Activated naive CD4-positive, alpha-beta T cell treated with anti-CD3 and anti-CD28 coated beads for 36 hours (primary cell): ENCODE measurements at regions of chr14 and their contacts with region 1.

Region 1: GRCh38 chr14:39102969-39103957 is at the start of gene SEC23A:
- DNase-seq: peak; percentile 87
- H3K4me3 Mint-ChIP-seq: peak within 1 kb of the TSS; percentile 87
- H3K27ac Mint-ChIP-seq: peak within 1 kb of the TSS; percentile 96
- H3K4me1 Mint-ChIP-seq: peaks cover 42% of the 10 kb centered on the region
- H3K27me3 Mint-ChIP-seq: no peaks in the 10 kb centered on the region
- total RNA-seq, gene SEC23A: 40.2 to 48.0 TPM

Region 2: GRCh38 chr14:39015360-39015961 is 87.8 kb before region 1 on chr14:
- CTCF ChIA-PET with region 1: no interaction called
- intact Hi-C with region 1: no loop called
- DNase-seq: peak; percentile 51
- H3K4me3 Mint-ChIP-seq: no peak overlapping the region
- H3K27ac Mint-ChIP-seq: no peak overlapping the region
- H3K4me1 Mint-ChIP-seq: no peaks in the 10 kb centered on the region
- H3K27me3 Mint-ChIP-seq: no peaks in the 10 kb centered on the region

Region 3: DNA sequence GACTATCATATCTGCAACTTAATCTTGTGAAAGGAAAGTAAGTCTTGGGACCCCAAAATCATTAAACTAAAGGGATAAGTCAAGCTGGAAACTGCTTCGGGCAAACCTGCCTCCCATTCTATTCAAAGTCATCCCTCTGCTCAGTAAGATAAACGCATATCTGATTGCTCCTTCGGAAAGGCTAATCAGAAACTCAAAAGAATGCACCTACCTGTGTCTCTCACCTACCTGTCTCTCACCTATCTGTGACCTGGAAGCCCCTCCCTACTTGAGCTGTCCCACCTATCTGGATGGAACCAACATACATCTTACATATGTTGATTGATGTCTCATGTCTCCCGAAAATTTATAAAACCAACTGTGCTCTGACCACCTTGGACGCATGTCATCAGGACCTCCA is 20.1 kb before region 1 on chr14:
- CTCF ChIA-PET with region 1: no interaction called
- intact Hi-C with region 1: no loop called
- DNase-seq: no peak
- H3K4me3 Mint-ChIP-seq: no peak overlapping the region
- H3K27ac Mint-ChIP-seq: no peak overlapping the region
- H3K4me1 Mint-ChIP-seq: peaks cover 2% of the 10 kb centered on the region
- H3K27me3 Mint-ChIP-seq: no peaks in the 10 kb centered on the region

Region 4: GRCh38 chr14:39114073-39114838 is 11.0 kb after region 1 on chr14 and contains the start of gene GEMIN2:
- CTCF ChIA-PET with region 1: no interaction called
- intact Hi-C with region 1: loop called (anchors 1 kb)
- DNase-seq: peak; percentile 96
- H3K4me3 Mint-ChIP-seq: peak within 1 kb of the TSS; percentile 94
- H3K27ac Mint-ChIP-seq: peak within 1 kb of the TSS; percentile 90
- H3K4me1 Mint-ChIP-seq: peaks cover 23% of the 10 kb centered on the region
- H3K27me3 Mint-ChIP-seq: no peaks in the 10 kb centered on the region
- total RNA-seq, gene GEMIN2: 20.7 to 22.7 TPM

Region 5: DNA sequence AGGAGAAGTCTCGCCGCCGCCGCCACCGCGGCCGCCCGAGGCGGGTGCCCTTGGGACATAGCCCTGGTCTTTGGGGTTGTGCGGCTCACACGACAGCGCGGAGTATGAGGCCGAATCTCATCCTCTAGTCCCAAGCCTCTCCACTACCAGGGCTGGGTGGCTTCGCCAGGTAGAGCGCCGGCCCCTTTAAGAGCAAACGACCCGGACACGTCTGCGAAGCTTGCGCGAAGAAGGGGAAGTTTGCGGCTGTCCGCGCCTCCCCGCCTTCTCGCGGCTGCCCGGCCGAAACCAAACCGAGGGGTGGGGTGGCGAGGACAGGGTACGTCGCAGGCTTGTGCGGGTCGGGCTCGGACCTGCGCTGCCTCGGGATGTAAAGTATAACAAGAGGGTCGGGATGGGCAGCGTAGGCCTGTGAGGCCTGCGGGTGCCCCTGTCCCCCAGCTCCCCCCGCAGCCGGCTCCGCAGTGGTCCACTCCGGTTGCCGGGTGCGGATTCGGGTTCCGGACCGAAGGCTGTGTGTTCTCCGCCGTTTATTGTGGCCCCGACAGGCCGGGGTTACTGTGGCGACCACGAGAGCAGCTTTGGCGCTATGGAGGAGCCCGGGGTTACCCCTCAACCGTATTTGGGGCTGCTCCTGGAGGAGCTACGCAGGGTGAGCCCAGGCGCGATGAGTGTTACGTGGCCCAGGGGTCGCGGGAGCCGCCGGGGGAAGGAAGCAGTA is 163.8 kb after region 1 on chr14:
- CTCF ChIA-PET with region 1: no interaction called
- intact Hi-C with region 1: loop called (anchors 2 kb)
- DNase-seq: peak; percentile 68
- H3K4me3 Mint-ChIP-seq: peak overlapping the region; percentile 72
- H3K27ac Mint-ChIP-seq: peak overlapping the region; percentile 93
- H3K4me1 Mint-ChIP-seq: peaks cover 48% of the 10 kb centered on the region
- H3K27me3 Mint-ChIP-seq: no peaks in the 10 kb centered on the region

Region 6: GRCh38 chr14:39383026-39383660 is 279.9 kb after region 1 on chr14:
- CTCF ChIA-PET with region 1: interaction called, 3 read pairs
- intact Hi-C with region 1: loop called (anchors 5 kb)
- DNase-seq: no peak
- H3K4me3 Mint-ChIP-seq: no peak overlapping the region
- H3K27ac Mint-ChIP-seq: no peak overlapping the region
- H3K4me1 Mint-ChIP-seq: peaks cover 22% of the 10 kb centered on the region
- H3K27me3 Mint-ChIP-seq: no peaks in the 10 kb centered on the region

Region 7: DNA sequence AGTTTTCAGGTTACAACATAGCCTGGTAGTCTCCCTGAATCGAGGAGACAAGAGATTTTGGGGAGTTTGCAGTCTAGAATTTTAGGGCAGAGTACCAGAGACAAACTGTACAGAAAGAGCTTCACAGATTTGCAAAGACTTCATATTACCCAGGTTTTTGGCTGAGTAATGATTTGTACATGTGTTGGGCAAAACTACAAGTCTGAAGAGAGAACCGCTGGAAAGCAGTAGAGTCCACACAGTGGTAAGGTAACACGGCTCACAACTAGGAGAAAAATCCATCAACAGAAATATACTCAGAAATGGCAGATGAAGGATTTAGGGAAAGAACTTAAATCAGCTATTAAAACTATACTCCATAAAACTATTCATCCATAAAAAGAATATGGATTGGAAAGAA is 303.3 kb after region 1 on chr14:
- CTCF ChIA-PET with region 1: no interaction called
- intact Hi-C with region 1: no loop called
- DNase-seq: no peak
- H3K4me3 Mint-ChIP-seq: no peak overlapping the region
- H3K27ac Mint-ChIP-seq: no peak overlapping the region
- H3K4me1 Mint-ChIP-seq: peaks cover 7% of the 10 kb centered on the region
- H3K27me3 Mint-ChIP-seq: no peaks in the 10 kb centered on the region

Region 8: GRCh38 chr14:39469094-39469710 is 365.9 kb after region 1 on chr14:
- CTCF ChIA-PET with region 1: no interaction called
- intact Hi-C with region 1: loop called (anchors 1 kb)
- DNase-seq: peak; percentile 70
- H3K4me3 Mint-ChIP-seq: no peak overlapping the region
- H3K27ac Mint-ChIP-seq: no peak overlapping the region
- H3K4me1 Mint-ChIP-seq: no peaks in the 10 kb centered on the region
- H3K27me3 Mint-ChIP-seq: peaks cover 9% of the 10 kb centered on the region

Region 9: DNA sequence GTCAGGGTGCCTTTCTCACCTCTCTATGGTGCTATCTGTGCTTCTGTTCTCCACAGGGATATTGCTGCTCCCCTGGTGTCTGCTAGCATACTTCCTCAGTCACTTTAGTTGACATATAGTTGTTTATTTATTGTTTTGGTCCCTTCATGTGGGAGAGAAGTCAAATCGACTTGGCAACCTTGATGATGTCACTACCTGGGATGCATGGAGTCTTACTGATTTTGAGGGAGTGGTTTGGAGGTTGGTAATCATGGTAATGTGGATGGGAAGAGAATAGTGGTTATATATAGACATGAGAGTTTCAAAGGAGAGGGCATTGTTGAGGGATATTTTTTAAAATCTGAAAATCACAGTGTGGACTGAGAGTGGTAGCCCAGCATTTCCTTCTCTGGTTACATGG is 402.5 kb after region 1 on chr14:
- CTCF ChIA-PET with region 1: no interaction called
- intact Hi-C with region 1: no loop called
- DNase-seq: no peak
- H3K4me3 Mint-ChIP-seq: no peak overlapping the region
- H3K27ac Mint-ChIP-seq: no peak overlapping the region
- H3K4me1 Mint-ChIP-seq: no peaks in the 10 kb centered on the region
- H3K27me3 Mint-ChIP-seq: no peaks in the 10 kb centered on the region